ENCODE measurements at regions of chr2 and their contacts with region 1.

Region 1: DNA sequence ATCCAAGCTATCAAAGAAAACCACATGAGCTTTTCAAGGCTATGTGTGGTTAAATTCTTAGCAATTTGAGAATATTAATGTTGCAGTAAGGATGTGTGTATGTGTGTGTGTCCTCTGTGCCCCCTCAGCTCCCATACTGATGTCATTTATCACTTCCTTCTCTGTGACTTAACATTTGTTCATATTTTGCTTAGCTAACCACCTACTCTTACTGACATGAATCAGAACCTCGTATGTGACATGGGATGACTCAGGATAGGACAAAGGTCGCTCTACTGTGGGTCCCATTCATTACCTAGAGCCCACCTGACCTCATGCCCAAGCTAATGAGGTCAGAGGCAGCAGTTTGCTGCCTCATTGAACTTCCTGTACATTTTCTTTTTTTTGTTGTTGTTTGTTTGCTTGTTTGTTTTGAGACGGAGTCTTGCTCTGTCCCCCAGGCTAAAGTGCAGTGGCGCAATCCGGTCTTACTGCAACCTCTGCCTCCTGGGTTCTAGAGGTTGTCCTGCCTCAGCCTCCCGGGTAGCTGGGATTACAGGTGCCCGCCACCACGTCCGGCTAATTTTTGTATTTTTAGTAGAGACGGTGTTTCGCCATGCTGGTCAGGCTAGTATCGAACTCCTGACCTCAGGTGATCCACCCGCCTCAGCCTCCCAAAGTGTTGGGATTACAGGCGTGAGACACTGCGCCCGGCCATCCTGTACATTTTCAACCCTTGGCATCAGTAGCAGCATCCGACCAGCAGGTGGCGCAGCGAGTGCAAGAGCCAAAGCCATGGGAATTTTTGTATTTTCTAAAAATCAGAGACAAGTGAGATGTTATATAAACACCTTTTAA is 36.4 kb downstream of the MOGAT1 start:
- DNase-seq: peak; percentile 60 to 87
- ATAC-seq: peak; percentile 75

Region 2: GRCh38 chr2:222753251-222753824 is 45.4 kb after region 1 on chr2:
- intact Hi-C with region 1: no loop called
- DNase-seq: peak in 1 of 2 donors; percentile 9
- ATAC-seq: peak; percentile 76

Region 3: DNA sequence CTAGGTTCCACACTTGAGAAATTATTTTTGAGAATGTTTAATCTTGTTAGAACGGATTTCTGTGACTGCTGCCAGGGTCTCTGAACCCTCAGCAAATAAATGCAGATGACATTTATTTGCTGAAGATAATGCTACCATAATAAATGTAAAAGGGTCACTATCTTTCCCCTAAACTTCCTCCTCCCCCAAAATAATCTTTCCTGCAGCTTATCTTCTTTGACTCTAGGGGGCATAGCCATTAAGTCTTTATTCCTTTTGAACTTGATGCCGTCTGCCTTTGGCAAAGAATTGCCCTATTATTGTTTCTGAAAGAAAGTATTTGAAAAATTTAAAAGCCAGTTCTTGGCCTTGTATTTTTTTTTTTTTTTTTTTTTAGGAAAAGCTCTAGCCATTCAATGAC is 89.4 kb after region 1 on chr2:
- intact Hi-C with region 1: loop called in 1 of 2 experiments (anchors 10 kb)
- DNase-seq: no peak
- ATAC-seq: no peak

Region 4: GRCh38 chr2:222860740-222861410 is 153.0 kb after region 1 on chr2 and contains the start of gene ACSL3:
- intact Hi-C with region 1: loop called in 1 of 2 experiments (anchors 5 kb)
- DNase-seq: peak; percentile 96
- ATAC-seq: peak; percentile 93
- total RNA-seq, gene ACSL3: 93.1 to 119 TPM